IMR-90 (cell line): ENCODE measurements at regions of chr15 and their contacts with region 1.

Region 1: DNA sequence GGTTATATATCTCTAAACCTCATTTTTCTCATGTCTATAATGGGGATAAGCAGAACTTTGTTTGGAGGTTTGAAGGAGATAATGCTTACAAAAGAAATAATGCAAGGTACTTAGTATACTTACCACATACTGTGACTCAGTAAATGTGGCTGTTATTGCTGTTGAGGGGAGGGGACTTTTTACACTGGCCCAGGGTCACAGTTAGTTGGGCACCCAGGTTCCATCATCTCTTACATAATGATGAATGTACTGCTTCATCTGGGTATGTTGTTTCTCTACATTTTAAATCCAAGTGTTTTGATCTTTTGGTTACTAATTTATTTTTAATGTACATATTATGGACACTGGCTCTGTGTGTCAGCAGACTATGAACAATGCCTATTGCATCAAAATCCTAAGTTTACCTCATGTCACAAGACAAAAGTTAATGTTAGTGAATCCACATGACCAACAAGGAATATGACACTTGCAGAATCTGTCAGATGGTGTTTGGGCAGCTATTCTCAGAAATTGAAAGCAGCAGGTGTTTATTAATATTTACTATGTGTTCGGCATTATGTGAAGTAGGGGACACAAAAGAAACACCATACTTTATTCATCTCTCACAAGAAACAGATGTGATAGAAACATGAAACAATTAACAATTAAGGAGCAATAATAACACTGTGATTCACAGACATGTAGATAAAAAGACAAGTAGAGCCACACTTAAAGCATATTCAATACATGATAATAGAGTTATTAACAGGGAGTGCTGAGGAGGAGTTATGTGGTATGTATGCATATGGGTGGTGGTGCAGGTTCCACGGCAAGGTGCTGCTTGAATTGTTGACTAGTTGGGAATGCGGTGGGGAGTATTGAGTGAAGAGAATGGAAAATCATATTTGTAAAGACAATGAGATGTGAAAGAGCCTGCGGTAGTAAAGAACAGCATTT is 109.7 kb downstream of the GALK2 start:
- DNase-seq: no peak
- ATAC-seq: no peak
- H3K4me3 ChIP-seq: no peak overlapping the region
- H3K27ac ChIP-seq: no peak overlapping the region
- H3K4me1 ChIP-seq: peaks cover 11% of the 10 kb centered on the region
- H3K27me3 ChIP-seq: no peaks in the 10 kb centered on the region
- CTCF ChIP-seq: no peak
- POLR2A ChIP-seq: no peak
- RAD21 ChIP-seq: no peak

Region 2: DNA sequence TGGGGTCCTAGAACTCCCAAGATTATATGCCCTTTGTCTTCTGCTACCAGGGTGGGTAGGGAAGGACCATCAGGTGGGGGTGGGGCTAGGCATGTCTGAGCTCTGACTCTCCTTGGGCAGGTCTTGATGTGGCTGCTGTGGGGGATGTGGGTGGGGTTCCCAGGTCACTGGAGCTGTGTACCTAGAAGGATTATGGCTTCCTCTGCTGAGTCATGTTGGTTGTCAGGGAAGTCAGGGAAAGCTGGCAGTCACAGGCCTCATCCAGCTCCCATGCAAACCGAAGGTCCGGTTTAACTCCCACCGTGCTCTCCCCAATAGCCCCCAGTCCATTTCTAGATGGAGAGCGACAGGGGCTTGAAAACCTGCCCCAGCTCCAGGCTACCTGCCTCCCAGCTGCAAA is 366.6 kb before region 1 on chr15:
- CTCF ChIA-PET with region 1: no interaction called
- POLR2A ChIA-PET with region 1: no interaction called
- dilution Hi-C with region 1: no loop called
- in situ Hi-C with region 1: no loop called
- intact Hi-C with region 1: no loop called
- DNase-seq: no peak
- ATAC-seq: no peak
- H3K4me3 ChIP-seq: no peak overlapping the region
- H3K27ac ChIP-seq: no peak overlapping the region
- H3K4me1 ChIP-seq: peaks cover 3% of the 10 kb centered on the region
- H3K27me3 ChIP-seq: no peaks in the 10 kb centered on the region
- CTCF ChIP-seq: no peak
- POLR2A ChIP-seq: no peak
- RAD21 ChIP-seq: no peak

Region 3: DNA sequence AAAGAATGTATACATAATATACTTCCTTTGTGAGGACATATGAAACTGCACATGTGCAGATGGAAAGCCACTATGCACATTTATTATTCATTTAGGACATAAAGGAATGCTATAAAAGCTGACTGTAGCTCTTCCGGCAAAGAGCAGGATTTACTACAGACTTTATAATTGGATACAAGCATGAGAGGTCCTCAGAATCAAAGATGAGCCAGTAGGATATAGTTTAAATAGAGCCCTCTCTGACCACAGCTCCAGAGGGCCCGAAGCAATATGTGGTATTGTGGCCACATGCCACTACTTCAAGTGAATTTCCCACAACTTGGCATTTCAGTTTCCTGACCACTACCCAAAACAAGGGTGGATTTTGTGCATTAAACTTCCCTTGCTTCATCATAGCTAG is 698.3 kb after region 1 on chr15:
- CTCF ChIA-PET with region 1: no interaction called
- POLR2A ChIA-PET with region 1: interaction called, 11 read pairs
- dilution Hi-C with region 1: no loop called
- in situ Hi-C with region 1: no loop called
- intact Hi-C with region 1: no loop called
- DNase-seq: no peak
- ATAC-seq: no peak
- H3K4me3 ChIP-seq: no peak overlapping the region
- H3K27ac ChIP-seq: no peak overlapping the region
- H3K4me1 ChIP-seq: peaks cover 5% of the 10 kb centered on the region
- H3K27me3 ChIP-seq: no peaks in the 10 kb centered on the region
- CTCF ChIP-seq: no peak
- POLR2A ChIP-seq: no peak
- RAD21 ChIP-seq: no peak